IMR-90 (cell line): ENCODE measurements at regions of chr18 and their contacts with region 1.

Region 1: DNA sequence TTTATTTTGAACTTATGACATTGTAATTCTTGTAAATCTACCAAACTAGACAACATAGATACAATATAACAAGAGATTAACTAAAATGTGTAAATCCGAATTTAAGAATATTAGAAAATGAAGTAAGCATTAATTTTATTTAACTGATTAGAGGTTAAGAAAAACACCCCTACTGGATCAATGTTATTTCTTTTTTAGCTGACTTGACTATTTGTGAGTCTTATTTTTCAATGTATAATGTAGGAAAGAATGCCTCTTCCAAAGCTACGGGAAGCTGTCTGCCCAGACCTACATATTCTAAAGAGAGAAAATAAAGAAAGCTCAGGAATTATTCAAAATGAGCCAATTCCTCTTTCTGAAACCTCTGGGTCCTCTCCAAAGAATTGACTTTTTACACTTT is 490.8 kb upstream of the CDH7 start:
- DNase-seq: no peak
- ATAC-seq: no peak
- H3K4me3 ChIP-seq: no peak overlapping the region
- H3K27ac ChIP-seq: no peak overlapping the region
- H3K4me1 ChIP-seq: no peaks in the 10 kb centered on the region
- H3K27me3 ChIP-seq: no peaks in the 10 kb centered on the region
- CTCF ChIP-seq: no peak
- POLR2A ChIP-seq: no peak
- RAD21 ChIP-seq: no peak

Region 2: DNA sequence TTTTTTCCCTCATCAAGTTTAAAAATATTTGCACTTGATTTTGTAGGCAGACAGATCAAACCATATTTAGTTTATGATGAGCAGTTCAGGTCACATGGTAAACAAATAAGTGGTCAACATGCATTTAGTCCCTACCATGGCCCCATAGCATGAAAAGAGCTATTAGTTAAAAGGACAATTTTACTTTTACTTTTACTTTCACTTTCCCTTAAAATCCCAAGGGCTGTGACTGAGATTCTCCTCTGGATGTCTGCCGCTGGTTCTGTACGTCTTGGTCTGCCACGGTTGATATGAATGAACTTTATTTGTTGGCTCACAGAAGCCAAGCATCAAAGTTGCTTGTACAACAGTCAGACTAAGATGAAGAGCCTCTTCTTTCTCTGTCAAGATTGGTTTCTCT is 135.4 kb before region 1 on chr18:
- CTCF ChIA-PET with region 1: no interaction called
- POLR2A ChIA-PET with region 1: no interaction called
- dilution Hi-C with region 1: no loop called
- in situ Hi-C with region 1: no loop called
- intact Hi-C with region 1: no loop called
- DNase-seq: no peak
- ATAC-seq: no peak
- H3K4me3 ChIP-seq: no peak overlapping the region
- H3K27ac ChIP-seq: no peak overlapping the region
- H3K4me1 ChIP-seq: no peaks in the 10 kb centered on the region
- H3K27me3 ChIP-seq: no peaks in the 10 kb centered on the region
- CTCF ChIP-seq: no peak
- POLR2A ChIP-seq: no peak
- RAD21 ChIP-seq: no peak

Region 3: GRCh38 chr18:65206551-65207260 is 53.3 kb before region 1 on chr18:
- CTCF ChIA-PET with region 1: no interaction called
- POLR2A ChIA-PET with region 1: no interaction called
- dilution Hi-C with region 1: no loop called
- in situ Hi-C with region 1: no loop called
- intact Hi-C with region 1: no loop called
- DNase-seq: no peak
- ATAC-seq: no peak
- H3K4me3 ChIP-seq: no peak overlapping the region
- H3K27ac ChIP-seq: no peak overlapping the region
- H3K4me1 ChIP-seq: no peaks in the 10 kb centered on the region
- H3K27me3 ChIP-seq: no peaks in the 10 kb centered on the region
- CTCF ChIP-seq: no peak
- POLR2A ChIP-seq: no peak
- RAD21 ChIP-seq: no peak

Region 4: DNA sequence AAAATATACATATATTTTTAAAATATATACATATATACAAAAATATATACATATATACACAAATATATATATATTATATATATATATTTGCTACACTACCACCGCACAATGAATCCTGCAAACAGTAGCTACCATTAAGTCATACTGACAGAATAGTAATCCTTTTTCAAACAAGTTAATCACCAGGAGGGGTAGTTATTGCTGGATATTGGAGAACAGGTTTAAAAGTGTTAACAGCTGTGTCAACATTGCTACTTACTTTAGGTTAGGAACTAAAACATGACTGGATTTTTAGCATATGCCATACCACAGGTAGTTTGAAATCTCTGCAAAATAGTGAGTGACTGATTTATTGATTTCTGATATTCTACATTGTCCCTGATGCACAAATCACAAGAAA is 38.3 kb before region 1 on chr18:
- CTCF ChIA-PET with region 1: no interaction called
- POLR2A ChIA-PET with region 1: interaction called, 14 read pairs
- dilution Hi-C with region 1: no loop called
- in situ Hi-C with region 1: no loop called
- intact Hi-C with region 1: no loop called
- DNase-seq: no peak
- ATAC-seq: no peak
- H3K4me3 ChIP-seq: no peak overlapping the region
- H3K27ac ChIP-seq: no peak overlapping the region
- H3K4me1 ChIP-seq: no peaks in the 10 kb centered on the region
- H3K27me3 ChIP-seq: no peaks in the 10 kb centered on the region
- CTCF ChIP-seq: no peak
- POLR2A ChIP-seq: no peak
- RAD21 ChIP-seq: no peak